ENCODE measurements at regions of chr3 and their contacts with region 1.

Region 1: DNA sequence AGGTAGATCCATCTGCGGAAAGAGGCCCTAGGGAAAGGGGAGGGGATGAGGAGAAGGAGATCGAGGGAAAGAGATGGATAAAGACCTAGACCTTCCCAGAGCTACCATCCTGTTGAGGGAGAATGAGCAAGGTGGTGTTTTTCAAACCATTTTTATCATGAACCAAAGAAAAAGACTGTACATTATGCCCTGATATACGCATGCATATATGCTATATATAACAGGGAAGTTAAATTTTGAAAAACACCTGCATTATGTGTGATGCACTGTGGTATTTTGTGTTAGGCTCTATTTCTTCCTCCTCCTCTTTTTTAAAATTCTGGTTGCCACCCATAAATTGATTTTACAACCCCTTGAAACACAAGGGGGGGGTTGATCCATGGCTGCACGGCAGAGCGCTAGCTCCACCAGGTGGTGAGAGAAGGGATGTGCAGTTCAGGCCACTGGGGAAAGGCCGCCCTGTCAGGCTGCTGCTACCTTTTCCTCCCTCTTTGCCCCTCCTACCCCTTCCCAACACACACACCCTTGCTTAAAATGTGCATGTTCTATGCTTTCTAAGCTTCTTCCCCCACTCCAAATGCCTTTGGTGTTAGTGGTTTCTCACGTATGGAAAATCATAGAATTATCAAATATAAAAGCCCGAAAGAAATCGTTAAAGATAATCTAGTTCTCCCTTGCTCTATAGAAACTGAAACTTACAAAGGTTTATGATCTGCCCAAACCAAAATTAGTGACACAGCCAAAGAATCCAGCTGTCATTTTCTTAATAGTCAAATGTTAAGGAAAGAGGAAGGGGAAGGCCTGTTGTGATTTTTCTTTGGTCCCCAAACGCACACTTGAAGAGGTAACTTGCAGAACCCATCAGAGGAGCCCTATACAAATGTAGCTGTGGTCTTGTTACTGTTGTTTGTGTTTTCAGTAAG is 262.0 kb upstream of the UMPS start:
- DNase-seq: peak; percentile 49
- ATAC-seq: peak; percentile 71

Region 2: DNA sequence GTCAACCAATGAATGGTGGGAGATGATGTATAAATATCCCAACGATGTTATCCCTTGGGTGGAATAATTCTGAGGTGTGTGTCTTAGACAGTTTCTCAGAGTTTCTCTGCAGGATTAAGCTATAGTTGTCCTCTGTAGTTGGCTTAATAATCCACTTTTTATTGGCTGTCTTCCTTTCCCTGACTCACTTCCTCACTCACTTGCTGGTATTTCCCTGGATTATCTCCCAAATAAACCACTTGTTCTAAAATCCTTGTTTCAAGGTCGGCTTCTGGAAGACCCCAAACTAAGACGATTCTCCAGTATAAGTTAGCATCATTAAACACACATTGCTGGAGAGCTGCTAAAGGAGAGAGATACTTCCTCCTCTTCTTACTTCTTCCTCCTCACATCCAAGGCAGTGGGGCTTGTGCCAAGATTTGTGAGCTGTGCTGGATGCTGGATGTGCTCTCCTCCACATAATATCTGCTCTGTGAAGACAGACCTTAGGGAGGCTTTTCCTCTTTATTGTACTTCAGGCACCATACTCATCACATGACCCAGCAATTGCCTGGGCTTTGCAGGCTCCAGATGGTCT is 453.8 kb before region 1 on chr3:
- intact Hi-C with region 1: loop called (anchors 10 kb)
- DNase-seq: no peak
- ATAC-seq: no peak

Region 3: DNA sequence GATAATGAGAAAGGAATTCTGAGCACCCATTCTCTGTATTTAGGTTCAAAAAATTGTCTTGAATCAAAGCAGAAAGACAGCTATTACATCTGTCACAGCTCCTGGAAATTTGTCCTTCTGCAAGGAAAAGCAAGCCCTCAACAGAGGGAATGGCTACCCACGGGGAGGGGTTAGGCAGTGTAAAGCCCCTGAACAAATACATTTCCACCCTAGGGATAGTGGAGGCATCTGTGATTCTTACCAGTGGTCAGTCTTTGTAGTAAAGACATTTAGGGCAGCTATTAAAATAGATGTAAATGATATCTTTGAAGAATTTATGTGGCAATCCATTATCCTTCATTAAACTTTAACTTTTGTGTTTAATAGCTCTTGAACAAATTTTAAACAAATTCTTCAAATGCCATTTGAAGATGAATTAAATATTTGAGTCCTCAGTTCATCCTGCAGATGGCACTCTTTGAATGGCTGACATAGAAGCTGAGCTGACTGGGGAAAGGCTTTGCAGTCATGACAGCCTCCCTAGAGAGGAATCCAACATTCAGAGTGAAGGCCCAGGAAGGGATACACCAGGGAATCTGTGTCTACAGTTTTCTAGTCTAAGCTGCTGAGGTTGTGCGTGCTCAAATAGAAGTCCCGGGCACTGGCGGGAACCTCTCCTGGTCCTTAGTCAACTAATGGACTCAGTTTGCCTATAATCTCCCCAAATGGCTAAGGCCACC is 116.7 kb before region 1 on chr3:
- intact Hi-C with region 1: loop called (anchors 2 kb)
- DNase-seq: no peak
- ATAC-seq: peak; percentile 73

Measured in left ventricle myocardium superior (tissue), 1 donor.